ENCODE measurements at regions of chr7 and their contacts with region 1.

Region 1: DNA sequence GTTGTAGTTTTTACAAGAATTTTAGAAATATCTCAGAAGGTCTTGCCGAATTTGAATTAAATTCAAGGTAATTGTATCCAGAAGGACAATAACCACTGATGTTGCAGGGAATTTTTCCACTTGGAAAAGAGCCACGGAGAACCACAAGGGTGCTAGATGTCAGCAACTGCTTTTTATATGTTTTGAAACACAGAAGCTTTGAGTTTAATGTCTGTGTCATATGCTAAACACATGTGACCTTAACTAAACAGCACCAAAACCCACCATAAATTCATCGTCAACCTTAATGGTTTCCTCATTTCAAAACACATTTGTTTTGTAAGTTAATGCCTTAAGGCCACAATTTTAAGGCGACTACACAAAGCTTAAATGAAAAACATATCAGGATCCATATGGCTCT is 106.9 kb downstream of the COL28A1 start:
- DNase-seq: no peak
- H3K4me3 ChIP-seq: no peak overlapping the region
- H3K27ac ChIP-seq: no peak overlapping the region
- H3K4me1 ChIP-seq: peaks cover 0 to 3% of the 10 kb centered on the region in 2 donors
- H3K27me3 ChIP-seq: no peaks in the 10 kb centered on the region
- CTCF ChIP-seq: no peak
- POLR2A ChIP-seq: no peak

Region 2: DNA sequence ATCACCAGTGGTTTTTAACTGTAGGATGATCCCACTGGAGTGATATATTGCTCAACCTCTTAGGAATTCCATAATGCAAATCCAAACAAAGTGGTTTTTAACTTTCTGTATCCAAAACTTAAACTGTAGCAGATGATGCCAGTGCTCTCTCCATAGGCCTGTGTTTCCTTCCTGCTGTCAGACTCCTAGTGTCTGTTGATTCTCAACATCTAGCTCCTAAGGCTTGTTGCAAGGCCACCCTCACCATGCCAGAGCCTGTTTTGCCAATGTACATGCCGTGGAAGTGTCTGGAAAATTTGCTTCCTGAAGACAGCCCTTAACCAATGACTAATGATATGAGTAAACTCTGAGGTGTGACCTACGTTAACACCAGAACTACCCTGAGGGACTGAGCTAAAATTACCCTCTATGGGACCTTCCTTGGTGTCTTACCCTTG is 207.2 kb before region 1 on chr7:
- intact Hi-C with region 1: no loop called
- DNase-seq: no peak
- H3K4me3 ChIP-seq: no peak overlapping the region
- H3K27ac ChIP-seq: no peak overlapping the region
- H3K4me1 ChIP-seq: peaks cover 0 to 10% of the 10 kb centered on the region in 2 donors
- H3K27me3 ChIP-seq: no peaks in the 10 kb centered on the region
- CTCF ChIP-seq: no peak
- POLR2A ChIP-seq: no peak

Region 3: GRCh38 chr7:7542251-7542835 is 113.5 kb after region 1 on chr7:
- intact Hi-C with region 1: loop called (anchors 5 kb)
- DNase-seq: no peak
- H3K4me3 ChIP-seq: no peak overlapping the region
- H3K27ac ChIP-seq: no peak overlapping the region
- H3K4me1 ChIP-seq: no peaks in the 10 kb centered on the region
- H3K27me3 ChIP-seq: no peaks in the 10 kb centered on the region
- CTCF ChIP-seq: no peak
- POLR2A ChIP-seq: no peak

Measured in thyroid gland (tissue), 4 donors.